Calu3 (cell line): ENCODE measurements at regions of chr11 and their contacts with region 1.

Region 1: GRCh38 chr11:34653826-34654490 is 33.1 kb downstream of the EHF start:
- DNase-seq: peak; percentile 82
- H3K4me3 Mint-ChIP-seq: peak overlapping the region; percentile 56
- H3K27ac Mint-ChIP-seq: peak overlapping the region; percentile 81
- H3K4me1 Mint-ChIP-seq: peaks cover 79% of the 10 kb centered on the region
- H3K27me3 Mint-ChIP-seq: no peaks in the 10 kb centered on the region
- CTCF ChIP-seq: no peak

Region 2: DNA sequence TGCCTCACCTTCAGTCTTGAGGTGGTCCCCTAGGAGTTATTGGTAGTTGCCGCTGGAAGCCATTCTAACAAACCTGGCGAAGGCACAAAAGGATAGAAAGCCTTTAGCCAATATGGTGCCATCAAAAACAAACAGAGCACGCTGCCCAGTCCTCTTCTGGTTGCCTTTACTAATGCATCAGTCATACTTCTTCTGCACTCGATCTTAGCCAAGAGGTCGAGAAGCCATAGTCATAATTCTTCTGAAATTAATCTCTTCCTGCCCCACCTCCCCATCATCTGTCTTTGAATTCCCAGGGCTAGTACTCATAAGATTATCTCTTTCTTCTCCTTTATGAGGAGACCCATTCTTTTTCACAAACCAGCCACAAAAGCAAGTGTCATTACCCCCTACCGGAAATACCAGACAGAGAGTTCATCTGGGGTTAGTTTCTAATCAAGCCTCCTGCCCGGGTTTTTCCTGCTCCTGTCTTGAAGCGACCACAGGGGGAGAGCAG is 54.5 kb before region 1 on chr11:
- CTCF ChIA-PET with region 1: interaction called, 11 read pairs
- intact Hi-C with region 1: loop called (anchors 1 kb)
- DNase-seq: peak; percentile 52
- H3K4me3 Mint-ChIP-seq: peak overlapping the region; percentile 51
- H3K27ac Mint-ChIP-seq: peak overlapping the region; percentile 81
- H3K4me1 Mint-ChIP-seq: peaks cover 77% of the 10 kb centered on the region
- H3K27me3 Mint-ChIP-seq: no peaks in the 10 kb centered on the region
- CTCF ChIP-seq: no peak

Region 3: GRCh38 chr11:34620820-34621792 is 32.9 kb before region 1 on chr11 and contains the start of gene EHF:
- CTCF ChIA-PET with region 1: interaction called, 8 read pairs
- intact Hi-C with region 1: loop called (anchors 2 kb)
- DNase-seq: peak; percentile 73
- H3K4me3 Mint-ChIP-seq: peak within 1 kb of the TSS; percentile 91
- H3K27ac Mint-ChIP-seq: peak within 1 kb of the TSS; percentile 96
- H3K4me1 Mint-ChIP-seq: peaks cover 44% of the 10 kb centered on the region
- H3K27me3 Mint-ChIP-seq: no peaks in the 10 kb centered on the region
- CTCF ChIP-seq: no peak
- total RNA-seq, gene EHF: 286 and 299 TPM in 2 replicates

Region 4: GRCh38 chr11:34640050-34640923 is 13.7 kb before region 1 on chr11:
- CTCF ChIA-PET with region 1: interaction called, 50 read pairs
- intact Hi-C with region 1: loop called (anchors 1 kb)
- DNase-seq: peak; percentile 88
- H3K4me3 Mint-ChIP-seq: peak overlapping the region; percentile 68
- H3K27ac Mint-ChIP-seq: peak overlapping the region; percentile 62
- H3K4me1 Mint-ChIP-seq: peaks cover 92% of the 10 kb centered on the region
- H3K27me3 Mint-ChIP-seq: no peaks in the 10 kb centered on the region
- CTCF ChIP-seq: no peak

Region 5: GRCh38 chr11:34667810-34668582 is 14.0 kb after region 1 on chr11:
- CTCF ChIA-PET with region 1: no interaction called
- intact Hi-C with region 1: no loop called
- DNase-seq: no peak
- H3K4me3 Mint-ChIP-seq: no peak overlapping the region
- H3K27ac Mint-ChIP-seq: peak overlapping the region; percentile 32
- H3K4me1 Mint-ChIP-seq: peaks cover 37% of the 10 kb centered on the region
- H3K27me3 Mint-ChIP-seq: no peaks in the 10 kb centered on the region
- CTCF ChIP-seq: no peak

Region 6: GRCh38 chr11:34706709-34707461 is 52.9 kb after region 1 on chr11:
- CTCF ChIA-PET with region 1: no interaction called
- intact Hi-C with region 1: no loop called
- DNase-seq: no peak
- H3K4me3 Mint-ChIP-seq: no peak overlapping the region
- H3K27ac Mint-ChIP-seq: no peak overlapping the region
- H3K4me1 Mint-ChIP-seq: no peaks in the 10 kb centered on the region
- H3K27me3 Mint-ChIP-seq: no peaks in the 10 kb centered on the region
- CTCF ChIP-seq: no peak

Region 7: DNA sequence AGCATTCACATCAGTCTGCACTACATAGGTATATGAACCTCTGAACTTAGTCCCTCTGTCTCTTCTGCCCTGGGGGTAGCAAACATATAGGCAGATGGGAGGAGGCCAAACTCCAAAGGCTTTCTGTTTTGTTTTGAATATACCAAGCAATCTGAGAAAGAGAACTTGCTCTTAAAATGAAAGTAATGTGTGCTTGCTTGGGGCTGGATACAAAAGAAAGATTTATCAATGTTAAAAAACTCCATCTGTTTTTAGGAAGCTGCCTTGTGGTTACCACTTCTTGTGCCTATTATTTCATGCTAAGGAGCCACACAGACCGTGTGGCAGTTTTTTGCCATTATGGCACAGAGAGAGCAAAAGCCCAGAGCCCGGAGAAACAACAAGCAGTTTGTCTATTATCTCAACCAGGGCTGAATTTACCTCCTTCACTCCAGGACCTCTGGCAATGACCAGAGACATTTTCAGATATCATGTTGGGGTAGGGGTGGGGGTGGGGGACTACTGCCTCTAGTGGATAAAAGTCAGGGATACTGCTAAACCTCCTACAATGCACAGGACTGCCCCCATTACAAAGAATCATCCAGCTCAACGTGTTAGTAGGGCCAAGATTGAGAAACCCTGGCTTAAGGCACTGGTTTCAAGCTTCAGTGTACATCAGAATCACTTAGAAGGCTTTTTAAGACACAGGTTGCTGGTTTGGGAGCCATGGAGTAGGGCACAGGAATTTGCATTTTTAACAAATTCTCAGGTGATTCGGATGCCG is 138.0 kb after region 1 on chr11:
- CTCF ChIA-PET with region 1: interaction called, 4 read pairs
- intact Hi-C with region 1: loop called (anchors 5 kb)
- DNase-seq: no peak
- H3K4me3 Mint-ChIP-seq: no peak overlapping the region
- H3K27ac Mint-ChIP-seq: peak overlapping the region; percentile 66
- H3K4me1 Mint-ChIP-seq: peaks cover 67% of the 10 kb centered on the region
- H3K27me3 Mint-ChIP-seq: no peaks in the 10 kb centered on the region
- CTCF ChIP-seq: peak; percentile 24

Region 8: GRCh38 chr11:34869426-34869825 is 215.5 kb after region 1 on chr11:
- CTCF ChIA-PET with region 1: no interaction called
- intact Hi-C with region 1: no loop called
- DNase-seq: no peak
- H3K4me3 Mint-ChIP-seq: no peak overlapping the region
- H3K27ac Mint-ChIP-seq: no peak overlapping the region
- H3K4me1 Mint-ChIP-seq: peaks cover 16% of the 10 kb centered on the region
- H3K27me3 Mint-ChIP-seq: no peaks in the 10 kb centered on the region
- CTCF ChIP-seq: no peak

Region 9: DNA sequence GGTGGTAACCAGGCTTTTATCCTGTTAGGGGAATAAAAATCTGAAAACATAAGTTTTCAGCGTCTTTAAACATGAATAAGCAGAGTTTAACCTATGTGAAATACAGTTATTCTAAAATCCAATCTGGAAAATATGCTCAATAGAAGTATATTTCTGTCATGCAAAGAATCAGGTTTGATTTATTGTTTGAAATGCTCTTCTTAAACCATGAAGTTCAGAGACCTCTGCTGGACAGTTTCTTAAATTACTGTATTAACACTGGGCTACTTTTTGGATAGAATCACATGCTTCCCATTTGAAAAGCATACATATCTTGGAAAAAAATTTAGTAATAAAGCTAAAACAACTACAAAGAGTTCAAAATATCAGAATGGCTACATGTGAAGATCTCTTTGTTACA is 236.9 kb after region 1 on chr11:
- CTCF ChIA-PET with region 1: interaction called, 3 read pairs
- intact Hi-C with region 1: loop called (anchors 1 kb)
- DNase-seq: no peak
- H3K4me3 Mint-ChIP-seq: no peak overlapping the region
- H3K27ac Mint-ChIP-seq: no peak overlapping the region
- H3K4me1 Mint-ChIP-seq: peaks cover 20% of the 10 kb centered on the region
- H3K27me3 Mint-ChIP-seq: no peaks in the 10 kb centered on the region
- CTCF ChIP-seq: no peak